ENCODE measurements at regions of chr2 and their contacts with region 1.

Region 1: DNA sequence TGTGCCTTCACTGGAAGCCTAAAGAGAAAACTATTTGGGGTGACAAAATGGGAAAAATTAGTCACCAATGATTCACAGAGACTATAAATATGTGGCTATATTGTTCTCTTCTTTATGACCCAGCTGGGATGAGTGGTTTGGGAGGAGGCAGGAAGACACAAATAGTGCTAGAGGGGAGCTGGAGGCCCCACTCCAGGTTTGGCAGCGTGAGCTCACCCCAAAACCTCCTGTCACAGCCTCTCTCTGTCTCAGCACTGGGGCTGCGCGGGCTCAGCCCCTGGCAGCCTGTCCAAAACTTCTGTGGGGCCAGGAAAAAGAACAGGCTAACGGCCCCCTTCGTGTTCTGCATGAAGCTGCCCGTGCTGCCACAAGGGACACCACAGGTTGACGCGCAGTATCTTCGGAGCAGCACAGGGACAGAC is 73.2 kb upstream of the LCLAT1 start:
- DNase-seq: no peak
- H3K4me3 Mint-ChIP-seq: no peak overlapping the region
- H3K27ac Mint-ChIP-seq: peak overlapping the region; percentile 49
- H3K4me1 Mint-ChIP-seq: peaks cover 35% of the 10 kb centered on the region
- H3K27me3 Mint-ChIP-seq: no peaks in the 10 kb centered on the region

Region 2: GRCh38 chr2:30410217-30410616 is 36.3 kb after region 1 on chr2:
- intact Hi-C with region 1: loop called (anchors 5 kb)
- DNase-seq: no peak
- H3K4me3 Mint-ChIP-seq: peak overlapping the region; percentile 45
- H3K27ac Mint-ChIP-seq: peak overlapping the region; percentile 93
- H3K4me1 Mint-ChIP-seq: peaks cover 51% of the 10 kb centered on the region
- H3K27me3 Mint-ChIP-seq: no peaks in the 10 kb centered on the region

Measured in activated T-helper 1 cell treated with anti-CD3 and anti-CD28 coated beads, Interleukin-12 subunit alpha, Interleukin-12 subunit beta, Interleukin-2, Interleukin-4 antibody, amounts not matched to agents 30 ng/mL and 10 ng/mL and 1 ng/mL, durations not matched to agents 14 hours and 24 hours and 36 hours (primary cell).